ENCODE measurements at regions of chr9 and their contacts with region 1.

Region 1: DNA sequence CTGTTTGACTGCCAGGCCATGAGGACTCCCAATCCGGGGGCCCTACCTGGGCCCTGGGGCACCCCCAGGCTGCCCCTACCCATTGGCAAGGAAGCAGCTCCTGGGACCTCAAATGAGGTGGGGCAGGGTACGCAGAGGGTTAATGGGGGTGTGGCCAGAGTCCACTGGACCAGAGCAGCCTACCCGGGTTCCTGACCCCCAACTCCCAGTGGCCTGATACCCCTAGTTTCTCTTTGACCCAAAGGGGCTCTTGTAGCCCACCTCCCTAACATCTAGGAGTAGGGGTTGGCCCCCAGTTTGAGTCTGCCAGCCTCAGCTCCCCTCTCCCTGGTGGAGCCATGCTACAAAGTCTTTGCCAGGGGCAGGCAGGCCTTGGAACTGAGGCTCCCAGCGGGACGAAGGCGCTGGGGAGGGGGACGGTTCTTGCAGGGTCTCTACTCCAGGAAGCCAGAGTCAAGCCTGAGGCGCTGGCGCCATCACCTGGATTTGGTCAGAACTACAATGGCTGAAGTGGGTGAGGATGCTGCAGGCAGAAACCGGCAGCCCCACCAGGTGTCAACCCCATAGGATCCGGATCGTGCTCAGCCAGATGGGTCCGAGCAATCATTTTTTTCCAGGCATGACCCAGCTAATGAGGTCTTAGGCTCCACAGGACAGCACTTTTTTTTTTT is 8.4 kb upstream of the CERCAM start:
- DNase-seq: peak; percentile 99
- ATAC-seq: peak; percentile 81
- H3K4me3 Mint-ChIP-seq: no peak overlapping the region
- H3K27ac Mint-ChIP-seq: no peak overlapping the region
- H3K4me1 Mint-ChIP-seq: peaks cover 42% of the 10 kb centered on the region
- H3K27me3 Mint-ChIP-seq: peaks cover 84% of the 10 kb centered on the region
- CTCF ChIP-seq: peak; percentile 83

Region 2: GRCh38 chr9:128296337-128297220 is 115.7 kb before region 1 on chr9:
- CTCF ChIA-PET with region 1: interaction called, 14 read pairs
- POLR2A ChIA-PET with region 1: no interaction called
- DNase-seq: no peak
- ATAC-seq: no peak
- H3K4me3 Mint-ChIP-seq: no peak overlapping the region
- H3K27ac Mint-ChIP-seq: peak overlapping the region; percentile 23; the same call in 1 of the 2 replicates
- H3K4me1 Mint-ChIP-seq: no peaks in the 10 kb centered on the region
- H3K27me3 Mint-ChIP-seq: peaks cover 2% of the 10 kb centered on the region; the same call in 1 of the 2 replicates
- CTCF ChIP-seq: no peak

Region 3: GRCh38 chr9:128361986-128362646 is 50.1 kb before region 1 on chr9:
- CTCF ChIA-PET with region 1: interaction called, 248 read pairs
- POLR2A ChIA-PET with region 1: interaction called, 7 read pairs
- DNase-seq: peak; percentile 88
- ATAC-seq: peak; percentile 66
- H3K4me3 Mint-ChIP-seq: peak overlapping the region; percentile 43
- H3K27ac Mint-ChIP-seq: no peak overlapping the region
- H3K4me1 Mint-ChIP-seq: peaks cover 40% of the 10 kb centered on the region
- H3K27me3 Mint-ChIP-seq: peaks cover 57% of the 10 kb centered on the region
- CTCF ChIP-seq: peak; percentile 85

Region 4: DNA sequence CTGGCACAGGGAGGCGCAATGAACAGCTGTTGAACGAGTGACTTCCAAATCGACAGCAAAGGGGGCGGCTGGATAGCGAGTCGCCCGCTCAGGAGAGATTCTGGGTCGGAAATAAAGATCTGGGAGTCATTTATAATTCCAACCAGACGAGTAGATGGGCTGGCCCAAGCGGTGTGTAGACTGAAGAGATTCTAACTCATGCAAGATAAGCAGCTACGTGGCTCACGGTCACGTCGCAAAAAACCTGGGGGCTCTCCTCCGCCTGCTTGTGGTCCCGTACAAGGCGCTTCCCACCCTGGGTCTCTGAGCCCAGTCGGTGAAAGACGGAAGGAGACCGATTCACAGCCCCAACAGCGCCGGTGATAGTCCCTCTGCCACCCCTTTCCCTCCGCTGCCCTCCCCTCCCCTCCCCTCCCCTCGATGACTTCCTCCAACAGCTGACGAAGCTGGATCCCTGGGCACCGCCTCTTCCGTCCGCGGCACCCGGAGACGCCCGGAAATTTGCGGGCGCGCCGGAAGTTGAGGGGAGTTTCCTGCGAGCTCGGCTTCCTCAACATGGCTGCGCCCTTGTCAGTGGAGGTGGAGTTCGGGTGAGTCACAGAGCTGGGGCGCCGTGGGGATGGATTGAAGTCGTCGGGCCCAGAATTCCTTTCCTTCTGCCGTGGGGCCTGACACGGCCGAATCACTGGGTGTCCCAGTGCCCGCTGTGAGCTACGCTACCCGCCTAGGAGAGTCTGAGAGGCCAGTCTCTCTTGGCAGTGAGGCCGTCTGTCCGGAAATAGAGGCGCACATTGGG is 41.2 kb before region 1 on chr9 and contains the start of gene URM1:
- CTCF ChIA-PET with region 1: interaction called, 248 read pairs
- POLR2A ChIA-PET with region 1: no interaction called
- DNase-seq: peak; percentile 92
- ATAC-seq: peak; percentile 89
- H3K4me3 Mint-ChIP-seq: peak within 1 kb of the TSS; percentile 95
- H3K27ac Mint-ChIP-seq: peak within 1 kb of the TSS; percentile 80
- H3K4me1 Mint-ChIP-seq: peaks cover 26% of the 10 kb centered on the region
- H3K27me3 Mint-ChIP-seq: peaks cover 35% of the 10 kb centered on the region
- CTCF ChIP-seq: no peak
- total RNA-seq, gene URM1: 52.0 to 67.9 TPM (median 54.3 TPM) in 3 replicates

Region 5: GRCh38 chr9:128383007-128383753 is 29.1 kb before region 1 on chr9:
- CTCF ChIA-PET with region 1: interaction called, 24 read pairs
- POLR2A ChIA-PET with region 1: interaction called, 3 read pairs
- DNase-seq: peak; percentile 69
- ATAC-seq: peak; percentile 83
- H3K4me3 Mint-ChIP-seq: peak overlapping the region; percentile 28
- H3K27ac Mint-ChIP-seq: no peak overlapping the region
- H3K4me1 Mint-ChIP-seq: peaks cover 56% of the 10 kb centered on the region
- H3K27me3 Mint-ChIP-seq: peaks cover 84% of the 10 kb centered on the region
- CTCF ChIP-seq: no peak

Region 6: DNA sequence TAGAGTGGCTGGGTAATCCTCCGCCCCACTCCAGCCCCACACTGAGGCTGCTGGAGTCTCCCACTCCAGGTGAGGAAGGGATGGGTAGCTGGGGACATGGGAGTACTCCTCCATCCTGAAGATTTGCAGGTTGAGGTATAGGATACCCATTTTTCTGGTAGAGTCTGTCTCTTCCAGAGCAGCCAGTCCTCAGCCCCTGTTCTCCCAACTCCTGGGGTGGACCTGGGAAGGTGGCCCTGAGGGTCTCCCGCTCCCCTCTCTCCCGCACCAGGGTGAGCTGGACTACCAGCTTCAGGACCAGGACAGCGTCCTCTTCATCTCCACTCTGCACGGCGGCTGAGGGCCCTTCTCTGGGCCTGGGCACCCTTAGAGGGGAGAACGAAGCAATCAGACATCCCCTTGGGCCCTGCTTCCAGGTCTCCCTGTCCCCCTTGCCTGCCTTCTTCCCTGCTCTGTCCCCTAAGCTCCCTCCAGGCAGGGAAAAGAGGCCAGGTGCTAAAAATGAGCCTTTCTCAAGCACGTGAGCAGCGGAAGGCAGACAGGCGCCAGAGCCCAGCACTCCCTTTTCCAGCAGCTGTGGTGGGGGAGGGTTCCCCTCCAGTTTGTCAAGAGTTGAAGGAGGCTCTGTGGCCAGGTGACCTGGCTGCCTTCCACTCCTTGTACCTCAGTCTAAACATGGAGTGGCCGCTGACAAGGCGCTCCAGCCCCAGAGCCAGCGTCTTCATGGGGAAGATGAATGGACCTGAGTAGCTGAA is 22.7 kb before region 1 on chr9:
- CTCF ChIA-PET with region 1: interaction called, 11 read pairs
- POLR2A ChIA-PET with region 1: no interaction called
- DNase-seq: peak; percentile 33
- ATAC-seq: peak; percentile 5; the same call in 1 of the 2 replicates
- H3K4me3 Mint-ChIP-seq: no peak overlapping the region
- H3K27ac Mint-ChIP-seq: no peak overlapping the region
- H3K4me1 Mint-ChIP-seq: peaks cover 65% of the 10 kb centered on the region
- H3K27me3 Mint-ChIP-seq: peaks cover 97% of the 10 kb centered on the region
- CTCF ChIP-seq: no peak

Region 7: DNA sequence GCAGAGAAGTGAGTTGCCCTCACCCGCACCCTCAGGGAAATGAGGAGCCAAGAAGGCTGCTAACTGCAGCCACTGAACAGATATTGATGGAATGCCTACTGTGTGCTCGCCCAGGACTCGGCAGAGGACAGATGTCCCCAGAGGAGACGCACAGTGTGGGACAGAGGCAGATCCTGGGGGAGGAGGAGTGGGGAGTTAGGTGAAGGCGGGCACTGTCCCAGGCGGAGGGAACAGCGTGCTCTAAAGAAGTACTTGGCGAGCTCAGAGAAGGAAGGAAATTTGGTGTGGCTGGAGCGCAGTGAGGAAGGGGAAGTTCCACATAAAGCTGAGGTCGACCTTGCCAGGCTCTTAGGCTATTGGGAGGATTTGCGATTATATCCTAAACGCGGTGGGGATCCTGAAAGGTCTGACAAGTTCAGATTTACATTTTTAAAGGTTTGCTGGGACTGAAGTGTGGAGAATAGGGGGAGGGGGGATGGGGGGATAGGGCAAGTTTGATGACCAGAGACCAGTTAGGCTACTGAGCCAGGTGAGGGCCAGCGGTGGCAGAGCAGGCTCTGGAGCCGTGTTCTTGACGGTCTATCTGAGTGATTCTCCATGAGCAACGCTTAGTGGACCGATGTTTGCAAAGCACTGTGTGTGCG is 15.2 kb before region 1 on chr9:
- CTCF ChIA-PET with region 1: interaction called, 11 read pairs
- POLR2A ChIA-PET with region 1: no interaction called
- DNase-seq: peak; percentile 39
- ATAC-seq: peak; percentile 41
- H3K4me3 Mint-ChIP-seq: no peak overlapping the region; the same call in 1 of the 2 replicates
- H3K27ac Mint-ChIP-seq: no peak overlapping the region
- H3K4me1 Mint-ChIP-seq: peaks cover 33% of the 10 kb centered on the region
- H3K27me3 Mint-ChIP-seq: peaks cover 97% of the 10 kb centered on the region
- CTCF ChIP-seq: no peak

Region 8: GRCh38 chr9:128540634-128541360 is 128.5 kb after region 1 on chr9:
- CTCF ChIA-PET with region 1: no interaction called
- POLR2A ChIA-PET with region 1: no interaction called
- DNase-seq: no peak
- ATAC-seq: no peak
- H3K4me3 Mint-ChIP-seq: no peak overlapping the region
- H3K27ac Mint-ChIP-seq: no peak overlapping the region
- H3K4me1 Mint-ChIP-seq: no peaks in the 10 kb centered on the region
- H3K27me3 Mint-ChIP-seq: no peaks in the 10 kb centered on the region
- CTCF ChIP-seq: no peak

Measured in WTC11 (cell line).